ENCODE measurements at regions of chr22 and their contacts with region 1.

Region 1: DNA sequence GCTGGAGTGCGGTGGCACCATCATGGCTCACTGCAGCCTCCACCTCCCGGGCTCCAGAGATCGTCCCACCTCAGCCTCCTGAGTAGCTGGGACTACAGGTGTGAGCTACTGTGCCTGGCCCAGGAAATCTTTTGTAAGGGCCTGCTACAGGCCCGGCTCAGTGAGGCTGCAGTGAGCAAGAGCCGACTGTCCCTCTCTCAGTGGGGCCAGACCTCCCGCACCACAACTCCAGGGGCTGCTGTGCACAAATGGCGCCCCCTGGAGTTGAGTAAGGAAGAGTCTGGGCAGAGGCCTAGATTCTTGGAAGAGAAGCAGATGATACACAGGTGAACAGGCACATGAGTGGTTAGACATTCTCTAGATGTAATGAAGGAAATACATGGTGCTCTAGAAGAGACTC is 7.0 kb downstream of the SERHL2 start:
- DNase-seq: no peak
- H3K4me3 ChIP-seq: no peak overlapping the region
- H3K27ac ChIP-seq: no peak overlapping the region
- H3K4me1 ChIP-seq: peaks cover 0 to 3% (median 1%) of the 10 kb centered on the region in 4 experiments; a peak in 1 of 7 replicates
- H3K27me3 ChIP-seq: peaks cover 0 to 8% (median 3%) of the 10 kb centered on the region in 4 experiments; a peak in 5 of 7 replicates
- CTCF ChIP-seq: peak; percentile 68 to 83 (median 69)
- EP300 ChIP-seq: no peak
- POLR2A ChIP-seq: no peak
- RAD21 ChIP-seq: peak; percentile 59 to 72

Region 2: DNA sequence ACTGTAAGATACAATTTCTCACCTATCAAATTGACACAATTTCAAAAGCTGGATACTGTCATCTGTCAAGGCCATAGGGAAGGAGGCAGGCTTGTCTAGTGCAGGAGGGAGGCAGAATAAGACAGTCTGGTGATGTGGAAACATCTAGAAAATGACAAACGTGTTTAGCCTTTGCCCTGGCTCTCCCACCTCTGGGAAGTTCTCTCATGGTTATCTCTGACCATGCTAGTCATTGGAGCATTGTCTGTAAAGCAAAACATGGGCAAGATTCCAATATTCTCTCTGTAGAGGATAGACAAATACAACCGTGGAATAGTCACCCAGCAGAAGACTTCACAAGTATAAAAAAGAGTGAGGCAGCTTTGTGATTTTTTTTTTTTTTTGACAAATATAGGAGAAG is 16.1 kb before region 1 on chr22:
- CTCF ChIA-PET with region 1: interaction called, 12 read pairs
- POLR2A ChIA-PET with region 1: interaction called, 7 read pairs
- DNase-seq: no peak
- H3K4me3 ChIP-seq: no peak overlapping the region
- H3K27ac ChIP-seq: no peak overlapping the region
- H3K4me1 ChIP-seq: 0 out of 7 replicates have a peak, but pooled peaks cover 0 to 4% (median 2%) of the 10 kb centered on the region in 4 experiments
- H3K27me3 ChIP-seq: no peaks in the 10 kb centered on the region; a peak in 1 of 7 replicates
- CTCF ChIP-seq: no peak
- EP300 ChIP-seq: no peak
- POLR2A ChIP-seq: no peak
- RAD21 ChIP-seq: no peak

Region 3: DNA sequence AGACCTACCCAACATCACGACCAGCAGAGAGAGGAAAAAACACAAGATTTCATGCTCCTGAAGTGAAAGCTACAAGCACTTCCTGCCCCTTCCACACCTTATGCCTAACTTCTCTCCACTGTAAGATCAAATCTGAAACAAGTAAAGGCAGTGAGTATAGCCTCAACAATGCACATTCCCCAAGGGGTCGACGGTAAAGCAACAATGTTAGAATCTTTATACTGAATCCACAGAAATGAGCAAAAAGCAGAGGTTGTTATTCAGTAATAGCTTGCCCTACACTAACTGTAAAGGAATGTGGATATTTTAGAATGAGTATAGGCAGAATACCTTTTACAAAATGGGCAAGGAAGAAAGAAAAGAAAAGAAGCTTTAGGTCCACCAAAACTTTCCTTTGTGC is 280.7 kb after region 1 on chr22:
- CTCF ChIA-PET with region 1: no interaction called
- POLR2A ChIA-PET with region 1: no interaction called
- DNase-seq: no peak
- H3K4me3 ChIP-seq: no peak overlapping the region
- H3K27ac ChIP-seq: no peak overlapping the region
- H3K4me1 ChIP-seq: no peaks in the 10 kb centered on the region
- H3K27me3 ChIP-seq: no peaks in the 10 kb centered on the region
- CTCF ChIP-seq: no peak
- EP300 ChIP-seq: no peak
- POLR2A ChIP-seq: no peak
- RAD21 ChIP-seq: no peak